ENCODE measurements at regions of chr10 and their contacts with region 1.

Region 1: GRCh38 chr10:68973975-68974374 is 14.6 kb upstream of the KIFBP start:
- DNase-seq: no peak
- H3K4me3 ChIP-seq: no peak overlapping the region
- H3K4me3 Mint-ChIP-seq: no peak overlapping the region
- H3K27ac ChIP-seq: no peak overlapping the region
- H3K27ac Mint-ChIP-seq: no peak overlapping the region
- H3K4me1 ChIP-seq: no peaks in the 10 kb centered on the region
- H3K4me1 Mint-ChIP-seq: no peaks in the 10 kb centered on the region
- H3K27me3 ChIP-seq: no peaks in the 10 kb centered on the region
- H3K27me3 Mint-ChIP-seq: no peaks in the 10 kb centered on the region
- CTCF ChIP-seq: no peak

Region 2: DNA sequence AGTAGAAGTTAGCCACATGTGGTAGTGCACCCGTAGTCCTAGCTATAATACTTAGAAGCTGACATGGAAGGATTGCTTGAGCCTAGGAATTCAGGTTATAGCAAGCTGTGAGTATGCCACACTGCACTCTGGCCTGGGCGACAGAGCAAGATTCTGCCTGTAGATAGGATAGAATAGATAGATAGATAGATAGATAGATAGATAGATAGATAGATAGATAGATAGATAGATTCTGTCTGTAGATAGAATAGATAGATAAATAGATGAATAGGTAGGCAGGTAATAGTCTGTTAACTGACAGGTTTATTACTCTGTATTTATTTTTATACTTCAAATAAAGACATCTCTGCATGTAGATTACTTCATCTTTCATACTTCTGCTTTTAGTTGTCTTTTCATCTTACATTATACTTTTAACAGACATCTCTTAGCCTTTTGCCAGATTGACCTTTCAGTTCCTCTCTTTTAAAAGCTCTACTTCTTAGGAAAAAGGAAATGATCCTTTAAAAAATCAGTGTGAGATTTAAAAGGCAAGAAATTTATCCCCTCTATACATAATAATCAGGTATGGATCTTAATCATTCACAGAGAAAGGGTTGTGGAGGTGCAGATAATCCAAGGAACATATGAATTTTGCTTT is 221.1 kb before region 1 on chr10:
- intact Hi-C with region 1: loop called in 1 of 2 experiments (anchors 10 kb)
- DNase-seq: peak in 1 of 3 donors; percentile 2
- H3K4me3 ChIP-seq: no peak overlapping the region
- H3K4me3 Mint-ChIP-seq: no peak overlapping the region
- H3K27ac ChIP-seq: peak overlapping the region in 1 of 2 donors; percentile 47
- H3K27ac Mint-ChIP-seq: peak overlapping the region in 5 of 7 donors; percentile 42 to 80 (median 57)
- H3K4me1 ChIP-seq: peaks cover 0 to 4% of the 10 kb centered on the region in 2 donors
- H3K4me1 Mint-ChIP-seq: peaks cover 5% of the 10 kb centered on the region
- H3K27me3 ChIP-seq: no peaks in the 10 kb centered on the region
- H3K27me3 Mint-ChIP-seq: no peaks in the 10 kb centered on the region
- CTCF ChIP-seq: no peak